ENCODE measurements at regions of chr5 and their contacts with region 1.

Region 1: DNA sequence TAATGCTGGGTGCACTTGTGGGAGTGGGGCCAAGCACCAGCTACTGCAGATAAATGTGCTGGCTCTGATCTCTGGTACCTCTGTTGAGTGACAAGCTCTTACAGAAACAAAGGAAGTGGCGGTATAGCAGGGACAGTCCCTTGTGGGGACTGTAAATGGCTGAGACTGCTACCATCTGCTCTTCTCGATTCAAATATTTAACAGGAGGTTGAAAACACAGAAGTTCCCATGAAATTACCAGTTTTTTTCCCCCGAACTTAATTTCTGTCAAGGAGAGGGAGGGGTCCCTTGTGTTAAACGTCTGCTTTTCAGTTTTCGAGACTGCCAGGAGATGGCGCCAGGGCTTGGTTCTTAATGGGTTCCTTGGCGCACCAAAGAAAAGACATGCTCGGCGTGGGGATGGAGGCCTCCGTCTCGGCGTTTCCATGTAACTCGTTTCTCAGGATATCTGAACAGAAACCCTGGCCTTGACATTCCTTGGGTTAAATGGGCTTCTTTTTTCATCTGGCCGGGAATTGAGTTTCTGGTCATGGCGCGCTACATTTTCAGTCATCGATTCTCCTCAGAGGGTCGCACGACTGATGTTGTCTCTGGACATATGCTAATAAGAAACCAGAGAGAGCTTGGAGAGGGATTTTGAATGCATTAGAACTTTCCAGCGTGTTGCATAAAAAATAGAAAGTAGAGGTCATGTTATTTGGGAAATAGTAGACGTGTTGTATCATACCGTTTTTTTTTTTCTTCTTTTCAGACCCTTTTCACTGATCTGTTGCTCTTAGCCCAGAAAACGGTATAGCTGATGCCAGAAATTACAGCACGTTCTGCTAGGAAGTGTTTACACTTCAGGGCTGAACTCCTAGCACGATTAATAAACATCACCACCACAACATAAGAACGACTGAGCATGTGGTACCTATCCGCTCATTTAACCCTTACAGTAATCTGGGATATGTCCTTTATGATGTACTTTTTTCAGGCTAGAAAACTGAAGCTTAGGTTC is 64.0 kb downstream of the CARTPT start:
- DNase-seq: peak; percentile 24 to 62
- ATAC-seq: peak; percentile 78 to 89
- H3K4me3 ChIP-seq: peak overlapping the region in 3 of 4 donors; percentile 35 to 43 (median 37)
- H3K27ac ChIP-seq: peak overlapping the region; percentile 9 to 58 (median 36)
- H3K4me1 ChIP-seq: peaks cover 0 to 8% of the 10 kb centered on the region in 2 donors
- H3K27me3 ChIP-seq: no peaks in the 10 kb centered on the region
- CTCF ChIP-seq: peak; percentile 43 to 66 (median 60)
- POLR2A ChIP-seq: no peak

Region 2: DNA sequence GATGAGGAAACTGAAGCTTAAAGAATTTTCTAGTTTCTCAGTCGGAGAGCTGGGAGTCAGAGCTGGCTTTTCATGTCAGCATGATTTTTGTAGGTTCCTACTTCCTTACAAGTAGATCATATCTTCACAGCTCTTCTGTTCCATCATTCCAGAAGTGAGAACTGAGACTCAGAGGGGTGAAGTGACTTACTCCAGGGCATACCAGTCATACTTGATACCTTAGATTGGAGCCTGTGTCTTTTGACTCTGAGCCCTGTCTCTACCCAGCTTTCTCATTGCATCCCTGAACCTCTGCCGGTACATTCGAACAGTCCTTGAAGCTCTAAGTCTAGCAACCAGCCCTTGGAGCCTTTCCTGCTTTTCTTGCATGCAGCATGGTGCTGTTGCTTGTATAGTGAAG is 142.7 kb before region 1 on chr5:
- in situ Hi-C with region 1: no loop called
- intact Hi-C with region 1: no loop called
- DNase-seq: no peak
- ATAC-seq: no peak
- H3K4me3 ChIP-seq: no peak overlapping the region
- H3K27ac ChIP-seq: no peak overlapping the region
- H3K4me1 ChIP-seq: no peaks in the 10 kb centered on the region
- H3K27me3 ChIP-seq: no peaks in the 10 kb centered on the region
- CTCF ChIP-seq: no peak
- POLR2A ChIP-seq: no peak

Region 3: GRCh38 chr5:72307968-72308852 is 525.1 kb after region 1 on chr5:
- in situ Hi-C with region 1: loop called in 3 of 4 experiments (anchors 5 to 25 kb)
- intact Hi-C with region 1: loop called (anchors 1 kb)
- DNase-seq: peak; percentile 98
- ATAC-seq: peak; percentile 97
- H3K4me3 ChIP-seq: peak overlapping the region; percentile 63 to 86 (median 81)
- H3K27ac ChIP-seq: peak overlapping the region; percentile 91 to 97 (median 94)
- H3K4me1 ChIP-seq: peaks cover 7 to 8% of the 10 kb centered on the region in 2 donors
- H3K27me3 ChIP-seq: no peaks in the 10 kb centered on the region
- CTCF ChIP-seq: peak; percentile 86 to 93 (median 87)
- POLR2A ChIP-seq: peak; percentile 83 to 95

Region 4: DNA sequence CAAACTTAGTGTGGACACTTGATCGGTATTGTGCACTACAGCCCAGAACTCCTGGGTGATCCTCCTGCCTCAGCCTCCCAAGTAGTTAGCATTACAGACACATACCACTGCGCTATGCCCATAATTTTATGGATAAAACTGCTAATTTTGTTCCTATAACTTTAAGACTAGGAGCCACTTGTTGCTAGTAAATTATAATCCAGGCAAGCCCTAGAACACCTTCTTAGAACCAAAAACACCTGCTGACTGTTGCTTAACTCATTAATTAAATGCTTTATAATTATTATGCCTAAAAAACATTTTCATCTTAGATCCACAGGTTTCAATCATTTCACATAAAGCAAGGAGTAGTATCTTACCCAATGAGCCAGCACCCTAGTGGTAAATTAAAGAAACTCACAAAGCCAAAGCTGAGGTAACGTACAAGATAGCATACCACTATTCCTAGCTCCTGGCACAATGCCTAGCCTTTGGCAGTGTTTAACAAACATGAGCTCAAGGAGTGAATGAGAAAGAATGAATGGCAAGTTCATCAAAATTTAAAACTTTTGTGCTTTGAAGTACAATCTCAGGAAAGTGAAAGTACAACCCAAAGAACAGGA is 531.6 kb after region 1 on chr5:
- in situ Hi-C with region 1: loop called (anchors 5 to 25 kb)
- intact Hi-C with region 1: no loop called
- DNase-seq: no peak
- ATAC-seq: no peak
- H3K4me3 ChIP-seq: no peak overlapping the region
- H3K27ac ChIP-seq: no peak overlapping the region
- H3K4me1 ChIP-seq: peaks cover 12 to 18% of the 10 kb centered on the region in 2 donors
- H3K27me3 ChIP-seq: no peaks in the 10 kb centered on the region
- CTCF ChIP-seq: no peak
- POLR2A ChIP-seq: no peak

Region 5: DNA sequence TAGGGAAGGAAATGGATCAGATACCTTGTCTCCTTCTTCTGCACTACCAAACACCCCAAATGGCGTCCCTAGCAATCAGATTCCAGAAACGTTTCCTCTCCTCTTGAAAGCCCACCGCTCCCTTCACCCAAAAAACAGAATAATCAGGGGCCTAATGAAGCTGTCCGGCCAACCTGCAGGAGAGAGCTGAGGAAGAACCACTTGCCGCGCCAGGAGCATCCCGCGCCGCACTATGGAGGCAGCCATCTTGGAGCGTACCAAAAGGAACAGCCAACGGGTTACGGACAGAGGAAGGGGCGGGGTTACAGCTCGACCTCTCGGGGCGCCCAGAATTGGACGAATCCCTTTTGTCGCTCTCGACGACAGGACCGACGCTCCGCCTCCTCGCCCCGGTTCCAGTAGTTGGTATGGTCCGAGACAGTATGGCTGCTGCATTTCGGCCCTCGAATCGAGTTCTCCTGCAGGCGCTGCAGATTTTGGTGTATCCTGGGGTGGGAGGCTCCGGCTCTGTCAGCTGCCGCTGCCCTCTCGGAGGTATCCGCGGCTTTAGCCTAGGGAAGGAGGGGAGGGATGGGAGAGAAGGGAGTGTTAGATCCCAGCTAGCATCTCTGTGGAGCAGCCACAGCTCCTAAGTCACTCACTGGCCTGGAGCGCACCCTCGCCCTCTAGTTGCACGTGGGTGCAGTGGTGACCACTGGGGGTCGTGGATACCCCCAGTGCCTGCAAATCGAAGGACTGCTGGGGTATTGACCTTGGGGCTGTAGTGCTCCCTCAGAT is 537.1 kb after region 1 on chr5 and contains the starts of genes MRPS27 and PTCD2:
- in situ Hi-C with region 1: loop called in 2 of 4 experiments (anchors 5 to 25 kb)
- intact Hi-C with region 1: no loop called
- DNase-seq: peak; percentile 95 to 96
- ATAC-seq: peak; percentile 99
- H3K4me3 ChIP-seq: peak within 1 kb of the TSS; percentile 80 to 96 (median 94)
- H3K27ac ChIP-seq: peak within 1 kb of the TSS; percentile 75 to 89 (median 82)
- H3K4me1 ChIP-seq: peaks cover 17 to 19% of the 10 kb centered on the region in 2 donors
- H3K27me3 ChIP-seq: no peaks in the 10 kb centered on the region
- CTCF ChIP-seq: no peak
- POLR2A ChIP-seq: peak; percentile 26 to 35
- total RNA-seq, gene MRPS27: 33.2 to 74.9 (median 62.3) TPM
- total RNA-seq, gene PTCD2: 6.7 to 13.2 (median 9.5) TPM

Measured in gastrocnemius medialis (tissue), 4 donors.